PC-3 (cell line): ENCODE measurements at regions of chr10 and their contacts with region 1.

Region 1: GRCh38 chr10:89115876-89116627 is 91.1 kb downstream of the CH25H start:
- DNase-seq: peak; percentile 46
- ATAC-seq: no peak
- H3K4me3 ChIP-seq: no peak overlapping the region
- H3K27ac ChIP-seq: no peak overlapping the region
- H3K4me1 ChIP-seq: no peaks in the 10 kb centered on the region
- H3K27me3 ChIP-seq: no peaks in the 10 kb centered on the region
- CTCF ChIP-seq: no peak

Region 2: DNA sequence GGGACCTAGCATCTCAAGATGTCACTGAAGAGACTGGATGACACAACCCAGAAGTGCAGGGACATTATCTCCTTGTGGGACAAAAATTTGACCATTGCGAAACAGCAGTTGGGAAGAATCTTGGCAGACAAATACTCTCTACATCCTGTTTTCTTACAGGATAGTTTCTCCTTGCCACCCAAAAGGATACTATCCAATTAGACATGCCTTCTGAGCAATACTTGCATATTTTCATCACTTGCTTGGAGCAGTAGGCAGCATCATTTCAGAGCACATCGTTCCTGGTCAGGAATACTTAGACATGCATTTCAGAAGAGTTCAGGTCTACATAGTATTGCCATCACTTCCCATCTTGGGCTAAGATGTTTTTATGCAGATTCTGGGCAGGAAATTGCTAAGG is 68.7 kb before region 1 on chr10:
- CTCF ChIA-PET with region 1: no interaction called
- POLR2A ChIA-PET with region 1: interaction called, 16 read pairs
- intact Hi-C with region 1: no loop called
- DNase-seq: no peak
- ATAC-seq: no peak
- H3K4me3 ChIP-seq: no peak overlapping the region
- H3K27ac ChIP-seq: no peak overlapping the region
- H3K4me1 ChIP-seq: 0 out of 2 replicates have a peak, but pooled peaks cover 4% of the 10 kb centered on the region
- H3K27me3 ChIP-seq: no peaks in the 10 kb centered on the region
- CTCF ChIP-seq: no peak

Region 3: DNA sequence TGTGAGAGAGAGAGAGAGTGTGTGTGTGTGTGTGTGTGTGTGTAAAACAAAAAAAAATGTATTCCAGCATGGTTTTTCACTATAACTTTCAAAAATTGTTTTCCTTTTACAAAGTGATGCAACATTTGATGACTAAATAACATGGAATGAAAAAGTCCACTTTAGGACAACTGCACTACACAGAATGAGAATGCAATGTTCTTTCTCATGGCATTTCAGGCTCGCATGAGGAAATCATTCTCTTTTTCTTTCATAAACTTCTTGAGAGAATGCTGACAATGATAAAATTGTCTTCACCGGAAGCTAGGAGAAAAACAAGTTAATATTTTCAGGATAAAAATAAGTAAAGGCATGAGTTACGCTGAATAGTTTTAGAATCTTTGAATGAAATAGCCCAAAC is 365.6 kb after region 1 on chr10:
- CTCF ChIA-PET with region 1: no interaction called
- POLR2A ChIA-PET with region 1: no interaction called
- intact Hi-C with region 1: no loop called
- DNase-seq: peak; percentile 64
- ATAC-seq: no peak; the same call in 1 of the 2 replicates
- H3K4me3 ChIP-seq: no peak overlapping the region
- H3K27ac ChIP-seq: no peak overlapping the region
- H3K4me1 ChIP-seq: peaks cover 11% of the 10 kb centered on the region
- H3K27me3 ChIP-seq: no peaks in the 10 kb centered on the region
- CTCF ChIP-seq: no peak